Activated CD4-positive, alpha-beta T cell treated with anti-CD3 and anti-CD28 coated beads for 36 hours (primary cell): ENCODE measurements at regions of chr21 and their contacts with region 1.

Region 1: GRCh38 chr21:34986561-34987500 is 62.3 kb downstream of the RUNX1 start:
- DNase-seq: peak; percentile 90
- ATAC-seq: peak; percentile 54
- H3K4me3 Mint-ChIP-seq: peak overlapping the region; percentile 61
- H3K27ac Mint-ChIP-seq: peak overlapping the region; percentile 89
- H3K4me1 Mint-ChIP-seq: peaks cover 97% of the 10 kb centered on the region
- H3K27me3 Mint-ChIP-seq: no peaks in the 10 kb centered on the region

Region 2: DNA sequence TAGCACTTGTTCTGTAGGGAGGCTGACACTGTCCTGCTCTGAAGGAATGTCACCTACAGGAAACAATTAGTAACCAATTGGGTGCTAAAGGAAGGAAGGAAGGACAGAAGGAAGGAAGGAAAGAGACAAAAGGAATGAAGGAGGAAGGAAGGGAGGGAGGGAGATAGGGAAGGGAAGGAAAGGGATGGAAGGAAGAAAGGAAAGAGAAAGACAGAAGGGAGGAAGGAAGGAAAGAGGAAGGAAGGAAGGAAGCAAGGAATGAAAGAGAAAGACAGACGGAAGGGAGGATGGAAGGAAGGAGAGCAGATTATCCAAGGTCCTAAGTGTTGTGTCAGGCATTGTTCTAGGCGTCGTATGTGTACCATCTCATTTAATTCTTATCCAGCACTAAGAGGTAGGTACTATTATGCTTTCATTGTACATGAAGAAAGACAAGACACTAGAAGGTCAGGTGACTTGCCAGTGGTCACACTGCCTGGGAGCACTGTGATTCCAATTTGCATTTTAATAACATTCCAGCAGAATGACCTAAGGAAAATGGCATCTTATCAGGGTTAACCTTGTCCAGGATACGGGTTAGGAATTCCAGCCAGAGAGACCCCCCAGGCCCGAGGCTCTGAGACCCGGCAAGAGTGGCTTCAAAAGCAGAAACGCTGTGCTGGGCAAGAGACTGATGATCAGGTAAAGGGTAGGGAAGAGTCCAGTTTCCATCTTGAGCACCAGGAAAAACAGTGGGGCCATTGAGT is 288.4 kb before region 1 on chr21:
- CTCF ChIA-PET with region 1: no interaction called
- POLR2A ChIA-PET with region 1: no interaction called
- intact Hi-C with region 1: no loop called
- DNase-seq: no peak
- ATAC-seq: no peak
- H3K4me3 Mint-ChIP-seq: no peak overlapping the region
- H3K27ac Mint-ChIP-seq: no peak overlapping the region
- H3K4me1 Mint-ChIP-seq: peaks cover under 1% of the 10 kb centered on the region
- H3K27me3 Mint-ChIP-seq: peaks cover 12% of the 10 kb centered on the region

Region 3: DNA sequence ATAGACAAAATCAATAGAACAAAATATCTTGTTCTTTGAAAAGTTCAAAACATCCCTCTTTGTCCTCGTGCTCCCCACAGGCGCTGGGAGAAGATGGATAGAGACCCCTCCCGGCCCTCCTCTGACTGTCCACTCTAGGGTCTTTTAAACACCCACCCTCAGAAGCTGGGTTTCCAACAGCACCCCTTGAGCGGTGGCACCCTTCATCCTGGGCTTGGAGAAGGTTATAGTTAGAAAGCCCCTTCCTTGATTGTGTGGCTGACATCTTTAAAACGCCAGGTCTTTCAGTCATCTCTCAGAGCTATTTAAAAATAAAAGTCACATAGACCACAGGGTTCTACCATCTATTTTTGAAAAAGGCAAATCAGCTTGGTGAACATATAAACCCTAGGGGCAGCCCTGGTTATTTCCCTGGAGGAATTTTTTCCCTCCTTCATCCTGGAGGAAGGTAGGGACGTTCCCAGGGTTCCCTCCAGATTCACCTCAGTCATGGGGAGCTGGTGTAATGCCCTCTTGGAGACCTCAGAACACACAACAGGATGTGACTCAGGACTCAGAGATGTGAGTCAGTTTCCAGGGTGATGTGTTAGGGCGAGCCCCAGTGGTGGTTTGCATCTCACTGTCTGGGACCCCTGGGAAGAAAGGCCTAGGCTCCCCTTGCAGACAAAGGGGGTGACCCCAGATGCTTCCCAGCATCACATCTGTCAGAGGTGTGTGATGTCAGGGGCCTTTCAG is 179.5 kb before region 1 on chr21:
- CTCF ChIA-PET with region 1: interaction called, 3 read pairs
- POLR2A ChIA-PET with region 1: no interaction called
- intact Hi-C with region 1: loop called (anchors 2 to 10 kb)
- DNase-seq: peak; percentile 83
- ATAC-seq: peak; percentile 92
- H3K4me3 Mint-ChIP-seq: no peak overlapping the region
- H3K27ac Mint-ChIP-seq: peak overlapping the region; percentile 87
- H3K4me1 Mint-ChIP-seq: peaks cover 90% of the 10 kb centered on the region
- H3K27me3 Mint-ChIP-seq: no peaks in the 10 kb centered on the region

Region 4: DNA sequence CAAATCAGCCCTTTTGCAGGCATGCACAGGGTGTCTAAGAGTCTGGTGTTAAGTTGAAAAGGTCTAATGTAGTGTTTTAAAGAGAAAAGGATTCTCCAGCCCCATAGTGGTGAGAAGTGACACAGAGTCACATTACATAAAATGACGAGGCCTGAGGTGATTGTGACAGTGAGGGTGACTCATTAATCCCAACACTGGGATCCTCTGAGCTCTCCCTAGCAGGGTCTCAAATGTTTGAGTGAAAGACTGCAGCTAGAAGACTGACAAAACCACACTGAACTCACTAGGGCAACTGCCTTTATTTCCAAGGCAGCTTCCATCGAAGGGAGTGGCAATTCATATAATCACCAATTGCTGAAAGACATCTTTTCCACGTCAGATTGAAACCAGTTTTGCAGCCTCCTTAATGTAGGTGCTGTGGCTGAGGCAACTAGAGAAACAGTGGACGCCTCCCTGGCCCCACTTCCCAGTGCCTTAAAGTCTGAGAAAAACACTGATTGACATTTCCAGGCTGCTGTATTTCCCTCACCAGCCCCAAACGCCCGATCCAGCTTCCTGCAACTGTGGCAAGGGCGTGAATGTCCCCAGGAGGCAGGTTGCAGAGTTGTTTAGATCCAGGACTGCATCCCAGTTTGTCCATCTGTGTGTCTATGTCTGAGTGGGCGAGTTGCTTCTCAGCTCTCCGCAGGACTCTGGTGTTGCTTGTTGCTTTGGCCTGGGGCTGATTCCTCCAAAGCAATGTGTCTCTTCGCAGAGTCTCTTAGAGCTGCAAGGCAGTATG is 19.1 kb before region 1 on chr21:
- CTCF ChIA-PET with region 1: interaction called, 30 read pairs
- POLR2A ChIA-PET with region 1: interaction called, 17 read pairs
- intact Hi-C with region 1: loop called (anchors 1 kb)
- DNase-seq: peak; percentile 73
- ATAC-seq: peak; percentile 70
- H3K4me3 Mint-ChIP-seq: peak overlapping the region; percentile 61
- H3K27ac Mint-ChIP-seq: peak overlapping the region; percentile 99
- H3K4me1 Mint-ChIP-seq: peaks cover 91% of the 10 kb centered on the region
- H3K27me3 Mint-ChIP-seq: no peaks in the 10 kb centered on the region

Region 5: DNA sequence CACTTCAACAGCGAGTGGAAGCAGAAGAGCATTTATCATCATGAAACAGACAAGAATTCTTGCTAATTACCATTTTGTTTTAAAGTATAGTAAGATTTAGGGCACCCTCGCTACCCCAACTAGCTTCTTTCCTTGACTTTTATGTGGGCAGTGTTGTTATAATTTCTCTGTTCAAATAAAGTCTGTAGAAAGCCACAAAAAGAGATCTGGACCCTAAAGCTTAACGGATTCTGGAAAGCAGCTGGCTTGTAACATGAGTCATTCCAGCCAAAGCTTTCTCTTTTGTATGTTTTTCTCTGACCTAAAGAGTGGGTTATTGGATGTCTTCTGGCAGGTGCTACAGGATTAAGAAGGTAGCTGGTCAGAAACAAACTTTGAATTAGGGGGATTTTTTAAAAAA is 24.9 kb after region 1 on chr21:
- CTCF ChIA-PET with region 1: interaction called, 10 read pairs
- POLR2A ChIA-PET with region 1: interaction called, 3 read pairs
- intact Hi-C with region 1: loop called in 1 of 2 experiments (anchors 2 kb)
- DNase-seq: no peak
- ATAC-seq: no peak
- H3K4me3 Mint-ChIP-seq: peak overlapping the region; percentile 19
- H3K27ac Mint-ChIP-seq: peak overlapping the region; percentile 52
- H3K4me1 Mint-ChIP-seq: peaks cover 93% of the 10 kb centered on the region
- H3K27me3 Mint-ChIP-seq: no peaks in the 10 kb centered on the region

Region 6: GRCh38 chr21:35084869-35085268 is 98.0 kb after region 1 on chr21:
- CTCF ChIA-PET with region 1: interaction called, 5 read pairs
- POLR2A ChIA-PET with region 1: interaction called, 7 read pairs
- intact Hi-C with region 1: loop called (anchors 1 kb)
- DNase-seq: no peak
- ATAC-seq: no peak
- H3K4me3 Mint-ChIP-seq: no peak overlapping the region
- H3K27ac Mint-ChIP-seq: no peak overlapping the region
- H3K4me1 Mint-ChIP-seq: peaks cover 44% of the 10 kb centered on the region
- H3K27me3 Mint-ChIP-seq: no peaks in the 10 kb centered on the region

Region 7: DNA sequence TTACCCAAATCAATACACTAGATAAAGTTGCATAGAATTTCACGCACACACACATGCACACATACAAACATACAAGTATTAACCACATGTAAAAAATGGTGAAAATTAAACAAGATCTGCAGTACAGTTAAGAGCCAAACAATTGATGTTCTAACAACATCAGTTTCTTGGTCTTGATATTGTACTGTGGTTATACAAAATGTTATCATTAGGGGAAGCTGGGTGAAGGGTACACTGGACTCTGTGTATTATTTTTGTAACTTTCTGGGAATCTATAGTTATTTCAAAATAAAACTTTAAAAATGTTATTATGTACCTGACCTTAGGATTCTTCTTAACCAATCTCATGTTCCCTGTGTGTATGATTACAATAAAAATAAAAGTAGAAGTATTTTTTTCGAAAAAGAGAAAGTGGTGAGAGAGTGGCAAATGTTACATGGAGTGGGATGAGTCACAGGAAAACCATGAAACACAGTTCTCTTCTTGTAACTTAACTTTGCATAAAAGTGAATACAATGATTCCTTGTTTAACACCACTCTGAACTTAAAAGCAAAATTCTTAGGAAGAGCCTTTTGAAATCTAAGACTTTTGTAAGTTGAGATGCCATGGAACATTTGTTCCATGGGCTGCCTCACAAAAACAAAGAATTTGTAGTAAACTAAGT is 163.9 kb after region 1 on chr21:
- CTCF ChIA-PET with region 1: no interaction called
- POLR2A ChIA-PET with region 1: no interaction called
- intact Hi-C with region 1: loop called in 1 of 2 experiments (anchors 5 kb)
- DNase-seq: no peak
- ATAC-seq: peak; percentile 72
- H3K4me3 Mint-ChIP-seq: peak overlapping the region; percentile 18
- H3K27ac Mint-ChIP-seq: peak overlapping the region; percentile 90
- H3K4me1 Mint-ChIP-seq: peaks cover 63% of the 10 kb centered on the region
- H3K27me3 Mint-ChIP-seq: no peaks in the 10 kb centered on the region